Activated naive CD4-positive, alpha-beta T cell treated with anti-CD3 and anti-CD28 coated beads, Interleukin-2, amount 10 ng/mL, durations not matched to agents 7 days and 5 days (primary cell): ENCODE measurements at regions of chr15 and their contacts with region 1.

Region 1: DNA sequence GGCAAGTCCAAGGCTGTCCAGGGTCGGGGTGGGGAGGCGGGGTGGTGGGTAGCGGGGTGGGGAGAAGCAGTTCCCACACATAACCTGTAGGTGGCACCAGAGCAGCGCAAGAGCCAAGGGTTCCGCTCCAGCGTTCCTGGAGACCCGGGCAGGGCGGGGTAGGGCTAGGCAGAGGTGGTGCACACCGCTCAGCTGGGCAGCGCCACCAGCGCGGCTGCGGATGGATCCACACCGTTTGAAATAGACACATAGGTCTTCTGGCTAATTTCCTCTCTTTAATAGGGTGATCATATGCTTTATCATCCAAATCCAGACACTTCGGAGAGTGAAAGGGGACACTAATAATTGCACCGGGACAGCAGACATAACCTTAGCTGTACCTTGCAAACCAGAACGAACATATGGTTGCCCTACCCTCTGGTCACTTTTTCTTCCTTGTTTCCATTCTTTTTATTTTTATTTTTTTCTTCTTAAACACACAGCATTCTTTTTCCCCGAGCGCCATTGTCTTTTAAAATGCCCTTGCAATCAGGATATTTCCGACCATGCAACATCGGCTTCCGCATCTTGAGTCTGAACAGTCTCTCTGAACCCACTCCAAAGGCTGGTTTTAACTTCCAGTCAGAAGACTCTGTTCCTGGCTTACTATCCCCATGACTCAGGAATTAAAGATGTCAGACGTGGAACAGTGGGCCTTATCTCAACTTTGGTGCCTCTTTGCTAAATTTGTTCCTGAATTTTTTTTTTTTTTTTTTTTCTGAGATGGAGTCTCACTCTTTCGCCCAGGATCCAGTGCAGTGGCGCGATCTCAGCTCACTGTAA is 12.5 kb upstream of the ZSCAN2 start:
- DNase-seq: peak; percentile 90
- H3K4me3 Mint-ChIP-seq: peak overlapping the region; percentile 31
- H3K27ac Mint-ChIP-seq: no peak overlapping the region
- H3K4me1 Mint-ChIP-seq: peaks cover 8% of the 10 kb centered on the region
- H3K27me3 Mint-ChIP-seq: peaks cover 23% of the 10 kb centered on the region

Region 2: GRCh38 chr15:84616235-84616634 is 28.0 kb after region 1 on chr15:
- CTCF ChIA-PET with region 1: no interaction called
- DNase-seq: no peak
- H3K4me3 Mint-ChIP-seq: no peak overlapping the region
- H3K27ac Mint-ChIP-seq: no peak overlapping the region
- H3K4me1 Mint-ChIP-seq: peaks cover 2% of the 10 kb centered on the region
- H3K27me3 Mint-ChIP-seq: no peaks in the 10 kb centered on the region

Region 3: GRCh38 chr15:84633311-84634227 is 45.3 kb after region 1 on chr15:
- CTCF ChIA-PET with region 1: interaction called, 11 read pairs
- DNase-seq: peak; percentile 79
- H3K4me3 Mint-ChIP-seq: peak overlapping the region; percentile 90
- H3K27ac Mint-ChIP-seq: peak overlapping the region; percentile 98
- H3K4me1 Mint-ChIP-seq: peaks cover 55% of the 10 kb centered on the region
- H3K27me3 Mint-ChIP-seq: no peaks in the 10 kb centered on the region

Region 4: DNA sequence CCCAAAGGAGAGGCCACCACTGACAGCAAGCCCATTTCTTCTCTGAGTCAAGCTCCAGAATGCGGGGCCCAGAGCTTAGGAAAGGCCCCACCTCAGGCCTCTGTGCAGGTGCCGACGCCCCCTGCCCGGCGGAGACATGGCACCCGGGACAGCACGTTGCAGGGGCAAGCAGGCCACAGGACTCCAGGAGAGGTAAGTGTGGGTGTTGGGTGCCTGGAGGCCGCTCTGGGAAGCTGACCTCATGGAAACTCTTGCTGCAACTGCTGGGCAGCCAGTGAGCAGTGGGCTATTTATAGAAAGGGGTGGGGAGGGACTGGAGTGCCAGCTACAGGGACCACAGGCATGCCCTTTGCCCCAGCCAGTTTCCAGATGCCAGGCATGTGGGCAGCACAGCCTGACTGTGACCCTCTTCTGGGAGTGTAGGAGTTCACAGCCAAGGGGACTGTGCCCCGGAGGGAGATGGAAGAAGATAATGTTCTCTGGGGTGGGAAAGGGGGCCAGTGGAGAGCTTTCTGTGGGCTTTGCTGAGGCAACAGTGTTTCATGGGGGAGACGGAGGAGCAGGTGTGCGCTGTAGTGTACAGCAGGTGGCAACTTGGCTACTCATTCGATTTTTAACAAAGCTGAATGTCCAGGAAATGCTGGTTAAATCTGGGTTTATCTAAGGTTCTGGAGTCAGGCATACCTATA is 252.6 kb after region 1 on chr15:
- CTCF ChIA-PET with region 1: no interaction called
- DNase-seq: no peak
- H3K4me3 Mint-ChIP-seq: no peak overlapping the region
- H3K27ac Mint-ChIP-seq: no peak overlapping the region
- H3K4me1 Mint-ChIP-seq: no peaks in the 10 kb centered on the region
- H3K27me3 Mint-ChIP-seq: peaks cover 16% of the 10 kb centered on the region

Region 5: GRCh38 chr15:84879088-84879792 is 291.0 kb after region 1 on chr15:
- CTCF ChIA-PET with region 1: interaction called, 37 read pairs
- DNase-seq: no peak
- H3K4me3 Mint-ChIP-seq: no peak overlapping the region
- H3K27ac Mint-ChIP-seq: no peak overlapping the region
- H3K4me1 Mint-ChIP-seq: peaks cover 4% of the 10 kb centered on the region
- H3K27me3 Mint-ChIP-seq: peaks cover 5% of the 10 kb centered on the region

Region 6: GRCh38 chr15:84929744-84930371 is 341.6 kb after region 1 on chr15:
- CTCF ChIA-PET with region 1: interaction called, 31 read pairs
- DNase-seq: no peak
- H3K4me3 Mint-ChIP-seq: no peak overlapping the region
- H3K27ac Mint-ChIP-seq: no peak overlapping the region
- H3K4me1 Mint-ChIP-seq: peaks cover 5% of the 10 kb centered on the region
- H3K27me3 Mint-ChIP-seq: peaks cover 11% of the 10 kb centered on the region